ENCODE measurements at regions of chr10 and their contacts with region 1.

Region 1: DNA sequence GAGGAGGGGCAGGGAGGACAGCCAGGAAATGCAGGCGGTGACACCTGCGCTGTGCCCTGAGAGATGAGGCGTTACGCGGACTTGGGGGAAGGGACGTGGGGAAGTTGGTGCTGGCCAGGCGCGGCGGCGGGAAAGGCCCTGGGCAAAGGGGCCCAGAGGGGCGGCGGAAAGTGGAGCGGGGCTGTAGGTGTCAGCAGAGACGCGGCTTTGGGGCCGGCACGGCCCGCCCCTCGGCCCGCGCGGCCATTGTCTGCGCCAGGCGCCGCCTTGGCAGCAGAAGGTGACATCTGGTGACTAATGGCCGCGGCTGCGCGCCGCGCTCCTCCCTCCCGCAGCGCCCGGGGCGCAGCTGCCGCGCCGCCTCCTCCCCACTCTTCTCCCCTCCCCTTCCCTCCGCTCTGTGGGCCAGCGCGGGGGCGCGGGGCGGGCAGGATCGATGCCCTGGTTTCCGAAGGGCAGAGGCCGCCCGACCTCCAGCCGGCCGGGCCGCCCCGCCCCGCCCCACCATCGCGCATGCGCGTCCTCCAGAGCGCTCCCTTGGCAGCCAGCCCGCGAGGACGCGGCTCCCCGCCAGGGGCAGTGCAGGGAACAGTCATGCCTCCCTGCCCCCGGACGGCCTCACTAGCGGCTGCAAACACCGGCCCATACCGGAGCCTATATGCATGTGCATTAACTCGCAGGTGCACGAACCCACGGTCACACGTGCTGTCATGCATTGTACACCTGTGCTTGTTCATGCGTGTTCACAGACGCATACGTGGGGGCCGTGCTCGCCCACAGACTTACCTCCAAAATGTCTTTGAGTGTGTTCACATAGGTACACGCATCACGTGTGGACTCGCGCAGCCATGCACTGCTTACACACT is 269.6 kb downstream of the RPS24 start:
- DNase-seq: peak; percentile 86 to 99 (median 92)

Region 2: DNA sequence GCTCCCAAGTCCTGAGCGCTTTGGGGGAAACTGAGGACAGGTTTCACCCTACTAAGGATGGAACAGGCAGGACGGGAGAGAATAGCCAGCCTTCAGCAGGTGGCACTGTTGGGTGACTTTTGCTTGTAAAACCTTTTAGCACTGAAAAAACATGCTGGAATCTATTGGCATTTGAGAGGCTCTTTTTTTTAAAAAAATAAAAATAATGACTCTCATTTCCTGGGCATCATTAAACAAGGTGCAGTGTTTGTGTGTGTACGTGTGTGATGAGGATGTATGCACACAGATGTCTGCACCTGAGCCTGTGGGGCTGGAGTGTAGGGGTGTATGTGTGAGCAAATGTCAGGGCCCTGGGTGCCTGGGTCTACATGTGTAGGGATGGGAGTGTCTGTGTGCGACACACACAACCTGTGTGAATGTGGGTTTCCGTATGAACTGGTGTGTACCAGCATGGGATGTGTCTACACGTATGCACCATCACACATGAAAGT is 91.6 kb before region 1 on chr10:
- intact Hi-C with region 1: loop called (anchors 2 kb)
- DNase-seq: peak in 8 of 10 donors; percentile 29 to 95 (median 72)

Region 3: DNA sequence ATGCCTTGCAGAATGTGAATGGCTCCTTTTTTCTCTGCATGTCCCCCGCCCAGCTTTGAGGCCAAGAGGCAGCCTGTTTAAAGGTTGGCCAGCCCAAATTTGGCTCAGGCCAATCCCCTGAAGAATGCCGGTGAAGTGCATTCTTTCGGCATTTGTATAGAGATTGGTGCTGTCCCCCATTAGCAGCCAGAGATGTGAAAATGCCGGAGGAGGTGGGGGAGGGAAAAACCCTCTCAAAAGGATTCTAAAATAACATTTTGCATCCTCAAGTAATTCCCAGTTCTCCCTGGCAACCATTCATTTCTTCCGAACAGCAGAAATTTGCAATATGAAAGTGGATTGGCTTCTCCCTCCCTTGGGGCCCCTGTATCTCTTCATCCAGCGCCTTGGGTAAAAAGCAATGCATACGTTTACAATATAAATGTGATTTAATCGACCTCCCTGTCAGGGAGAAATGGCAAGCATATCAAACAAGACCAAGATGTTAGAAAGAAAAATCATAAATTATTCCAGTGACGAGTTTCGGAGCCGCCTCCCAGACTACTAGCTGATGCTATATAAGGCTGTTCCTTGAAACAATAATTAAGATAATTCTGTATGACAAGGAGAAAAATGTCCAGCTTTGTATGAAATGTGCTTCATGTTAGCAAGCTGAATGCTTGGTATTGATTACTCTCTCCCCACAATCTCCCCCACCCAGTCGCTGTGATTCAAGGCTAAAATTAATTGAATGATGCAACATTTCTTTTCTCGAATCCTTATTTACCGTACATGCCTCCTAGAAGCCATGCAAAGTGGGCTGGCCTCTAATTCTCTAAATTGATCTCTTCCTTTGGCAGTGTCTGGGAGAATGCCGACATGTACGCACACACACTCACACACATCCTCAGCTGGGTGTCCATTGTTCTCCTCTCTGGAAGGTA is 54.2 kb after region 1 on chr10:
- intact Hi-C with region 1: loop called (anchors 5 kb)
- DNase-seq: peak in 1 of 10 donors; percentile 14

Region 4: GRCh38 chr10:78577712-78578111 is 274.5 kb after region 1 on chr10:
- intact Hi-C with region 1: no loop called
- DNase-seq: no peak

Region 5: GRCh38 chr10:78972947-78973900 is 670.0 kb after region 1 on chr10:
- intact Hi-C with region 1: loop called (anchors 10 kb)
- DNase-seq: peak; percentile 71 to 97 (median 81)

Region 6: GRCh38 chr10:79195091-79195923 is 892.1 kb after region 1 on chr10:
- intact Hi-C with region 1: loop called (anchors 5 kb)
- DNase-seq: peak; percentile 70 to 98 (median 86)

Measured in posterior cingulate gyrus (tissue), 11 donors.